Panc1 (cell line): ENCODE measurements at regions of chr12 and their contacts with region 1.

Region 1: GRCh38 chr12:51341259-51342007 is 5.0 kb downstream of the CELA1 start:
- DNase-seq: peak; percentile 85
- ATAC-seq: peak; percentile 89
- H3K4me3 ChIP-seq: peak overlapping the region in 1 of 2 experiments; percentile 21; a peak in 1 of 4 replicates
- H3K27ac ChIP-seq: no peak overlapping the region
- H3K4me1 ChIP-seq: no peaks in the 10 kb centered on the region
- H3K27me3 ChIP-seq: no peaks in the 10 kb centered on the region
- CTCF ChIP-seq: peak; percentile 98

Region 2: DNA sequence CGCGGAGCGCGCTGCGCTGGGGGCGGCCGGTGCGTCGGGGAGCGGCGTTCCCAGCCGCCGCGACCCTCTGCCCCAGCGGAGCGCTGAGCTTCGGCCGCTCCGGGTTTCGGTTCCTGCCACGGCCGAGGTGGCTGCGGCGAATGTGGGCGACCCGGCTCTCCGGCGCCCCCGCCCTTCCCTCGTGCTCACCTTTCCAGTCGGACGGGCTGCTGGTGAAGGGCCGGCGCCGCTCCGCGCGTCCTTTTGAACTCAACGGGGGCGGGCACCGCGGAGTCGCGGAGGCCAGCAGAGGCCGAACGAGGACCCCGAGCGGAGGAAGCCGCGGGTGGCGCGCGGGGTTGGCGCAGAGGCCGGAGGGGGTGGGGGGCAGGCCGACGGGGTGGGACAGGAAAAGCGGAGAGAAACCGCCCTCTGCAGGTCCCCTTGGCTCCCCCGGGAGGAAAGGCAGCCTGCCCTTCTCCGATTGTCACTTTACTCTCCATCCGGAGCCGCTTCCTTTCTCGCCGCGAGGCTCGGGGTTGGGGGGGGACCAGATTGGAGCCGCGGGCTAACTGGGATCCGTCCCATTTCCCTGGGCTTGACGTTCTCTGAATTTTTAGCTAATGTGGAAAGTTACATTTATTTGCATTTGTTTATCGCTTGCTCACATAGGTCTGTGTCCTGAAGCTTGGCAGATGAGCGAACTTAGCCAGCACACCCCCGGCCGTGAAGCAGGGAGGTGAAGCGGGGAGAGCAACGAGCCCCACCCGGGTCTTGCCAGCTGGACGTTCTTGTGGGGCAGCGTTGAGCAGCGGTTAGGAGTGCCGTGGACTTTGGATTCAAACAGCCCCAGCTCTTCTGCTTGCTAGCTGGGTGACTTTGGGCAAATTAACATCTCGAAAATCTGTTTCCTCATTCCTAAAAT is 71.1 kb before region 1 on chr12 and contains the start of gene SMAGP:
- CTCF ChIA-PET with region 1: interaction called, 11 read pairs
- POLR2A ChIA-PET with region 1: no interaction called
- in situ Hi-C with region 1: no loop called
- intact Hi-C with region 1: loop called (anchors 5 kb)
- DNase-seq: no peak
- ATAC-seq: peak; percentile 79
- H3K4me3 ChIP-seq: peak within 1 kb of the TSS; percentile 54 to 69
- H3K27ac ChIP-seq: no peak within 1 kb of the TSS
- H3K4me1 ChIP-seq: peaks cover 6% of the 10 kb centered on the region; the same call in 1 of the 2 replicates
- H3K27me3 ChIP-seq: peaks cover 4% of the 10 kb centered on the region; the same call in 1 of the 2 replicates
- CTCF ChIP-seq: no peak
- total RNA-seq, gene SMAGP: 2.4 TPM

Region 3: DNA sequence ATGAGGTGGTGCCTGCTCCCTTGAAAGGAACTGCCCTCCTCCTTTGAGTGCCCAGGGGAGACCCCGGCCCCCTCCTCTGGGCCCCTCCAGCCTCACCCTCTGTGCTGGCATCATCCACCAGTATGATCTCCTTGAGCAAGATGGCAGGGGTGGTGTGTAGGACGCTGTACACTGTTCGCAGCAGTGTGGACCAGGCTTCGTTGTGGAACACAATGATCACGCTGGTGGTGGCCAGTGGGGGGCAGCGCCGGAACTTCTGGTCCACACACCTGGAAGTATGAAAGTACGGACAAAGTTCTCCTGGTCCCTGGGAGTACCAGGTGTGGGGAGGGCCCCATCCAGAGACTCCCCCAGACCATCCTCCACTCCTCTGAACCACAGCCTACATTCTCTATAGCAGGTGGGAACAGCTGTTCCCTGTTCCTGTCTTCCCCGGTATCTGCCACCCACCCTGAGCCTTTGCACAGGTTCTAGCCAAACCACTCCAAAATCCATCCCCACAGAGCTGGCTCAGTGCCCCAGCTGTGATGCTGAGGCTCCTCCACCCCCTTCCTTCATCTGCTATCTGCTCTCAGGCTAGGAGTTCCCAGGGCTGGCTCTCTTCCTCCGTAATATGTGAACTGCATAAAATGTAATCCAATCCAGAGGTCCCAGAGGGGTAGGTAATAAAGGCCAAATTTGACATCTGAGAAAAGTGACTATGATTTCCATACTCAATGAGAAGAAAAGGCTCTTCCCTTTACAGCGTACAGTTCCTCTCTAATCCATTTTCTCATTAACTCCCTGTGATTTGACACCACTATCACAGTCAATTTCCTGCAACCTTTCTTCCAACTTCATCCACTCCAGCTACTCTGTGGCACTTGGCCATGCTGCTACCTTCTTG is 35.9 kb after region 1 on chr12:
- CTCF ChIA-PET with region 1: no interaction called
- POLR2A ChIA-PET with region 1: interaction called, 15 read pairs
- in situ Hi-C with region 1: no loop called
- intact Hi-C with region 1: no loop called
- DNase-seq: no peak
- ATAC-seq: no peak
- H3K4me3 ChIP-seq: no peak overlapping the region
- H3K27ac ChIP-seq: no peak overlapping the region
- H3K4me1 ChIP-seq: no peaks in the 10 kb centered on the region; the same call in 1 of the 2 replicates
- H3K27me3 ChIP-seq: no peaks in the 10 kb centered on the region
- CTCF ChIP-seq: no peak; the same call in 1 of the 2 replicates